ENCODE measurements at regions of chr9 and their contacts with region 1.

Region 1: GRCh38 chr9:93637886-93638285 is 61.5 kb downstream of the PHF2 start:
- DNase-seq: no peak
- ATAC-seq: no peak

Region 2: DNA sequence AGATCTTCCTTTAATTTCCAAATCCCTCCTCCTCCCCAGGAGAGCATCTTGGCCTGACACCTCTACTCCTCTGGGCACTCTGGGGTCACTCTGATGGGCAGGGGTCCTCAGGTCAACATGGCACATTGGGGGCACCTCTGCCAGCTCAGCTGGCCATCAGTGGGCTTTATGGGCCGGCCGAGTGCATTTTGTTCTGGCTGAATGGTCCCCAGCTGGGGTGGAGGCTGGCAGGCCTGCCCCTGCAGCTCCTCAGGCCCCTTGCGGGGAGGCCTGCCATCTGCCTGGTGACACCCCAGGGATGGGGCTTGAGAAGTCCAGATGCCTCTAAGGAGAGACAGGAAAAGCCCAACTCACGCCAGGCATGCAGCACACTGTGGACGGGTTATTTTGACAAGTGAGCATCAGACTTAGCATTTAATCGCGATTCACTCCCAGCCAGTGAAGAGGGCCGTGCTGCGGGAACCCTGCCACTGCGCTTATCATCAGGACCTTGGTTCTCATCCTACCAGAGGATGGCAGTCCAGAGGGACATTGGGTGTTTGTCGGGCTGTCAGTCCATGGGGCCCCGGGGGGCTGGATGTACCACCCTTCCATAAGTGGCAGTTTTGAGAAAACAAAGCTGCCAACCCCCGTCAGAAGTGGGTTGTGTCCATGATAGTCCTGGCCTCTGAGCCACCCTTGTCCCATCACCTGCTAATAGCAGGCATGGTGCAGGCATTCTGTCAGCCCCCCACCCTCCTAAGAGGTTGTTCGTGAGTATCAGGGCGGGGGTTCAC is 39.8 kb before region 1 on chr9:
- intact Hi-C with region 1: loop called (anchors 2 kb)
- DNase-seq: peak; percentile 42
- ATAC-seq: no peak

Region 3: DNA sequence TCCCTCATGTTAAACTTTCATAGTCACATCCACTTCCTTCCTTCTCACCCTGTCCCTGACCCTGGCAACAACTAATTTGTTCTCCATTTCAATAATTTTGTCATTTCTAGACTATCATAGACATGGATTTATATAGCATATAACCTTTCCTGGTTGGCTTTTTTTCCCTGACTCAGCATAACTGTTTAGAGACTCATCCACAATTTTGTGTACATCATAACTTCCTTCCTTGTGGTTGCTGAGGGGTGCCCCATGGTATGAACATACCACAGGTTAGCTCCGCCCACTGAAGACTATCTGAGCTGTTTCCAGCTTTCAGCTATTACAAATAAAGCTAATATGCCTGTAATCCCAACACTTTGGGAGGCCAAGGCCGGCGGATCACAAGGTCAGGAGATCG is 75.8 kb after region 1 on chr9:
- intact Hi-C with region 1: no loop called
- DNase-seq: no peak
- ATAC-seq: no peak

Region 4: GRCh38 chr9:95189251-95190098 is 1551.6 kb after region 1 on chr9:
- intact Hi-C with region 1: no loop called
- DNase-seq: no peak
- ATAC-seq: peak; percentile 92

Region 5: GRCh38 chr9:95434116-95435073 is 1796.5 kb after region 1 on chr9:
- intact Hi-C with region 1: no loop called
- DNase-seq: no peak
- ATAC-seq: peak; percentile 42